MCF 10A (cell line): ENCODE measurements at regions of chrX and their contacts with region 1.

Region 1: DNA sequence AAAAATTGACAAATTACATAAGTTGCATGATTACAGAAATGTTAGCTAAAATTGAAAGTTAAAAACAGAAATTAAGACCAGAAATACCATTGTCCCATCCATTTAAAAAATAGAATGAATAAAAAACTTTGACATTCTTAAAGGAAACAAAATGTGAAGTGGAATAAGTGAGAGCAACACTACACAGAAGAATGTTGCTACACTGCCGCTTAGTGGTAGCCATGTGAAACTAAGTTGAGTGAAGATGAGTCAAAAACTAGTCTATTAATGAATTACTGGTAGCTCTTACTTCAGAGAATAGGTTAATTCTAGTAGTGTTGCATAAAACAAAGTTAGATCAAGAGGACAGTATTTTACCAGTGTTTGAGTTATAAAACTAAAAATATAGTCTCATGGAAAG is 571.0 kb upstream of the KLHL4 start:
- DNase-seq: peak; percentile 67
- H3K4me3 Mint-ChIP-seq: no peak overlapping the region
- H3K27ac Mint-ChIP-seq: no peak overlapping the region
- H3K4me1 Mint-ChIP-seq: no peaks in the 10 kb centered on the region
- H3K27me3 Mint-ChIP-seq: peaks cover 34% of the 10 kb centered on the region
- CTCF ChIP-seq: peak; percentile 75

Region 2: GRCh38 chrX:85611926-85612325 is 1334.6 kb before region 1 on chrX:
- CTCF ChIA-PET with region 1: interaction called, 4 read pairs
- POLR2A ChIA-PET with region 1: no interaction called
- intact Hi-C with region 1: loop called (anchors 1 kb)
- DNase-seq: peak; percentile 38
- H3K4me3 Mint-ChIP-seq: no peak overlapping the region
- H3K27ac Mint-ChIP-seq: no peak overlapping the region
- H3K4me1 Mint-ChIP-seq: peaks cover 5% of the 10 kb centered on the region
- H3K27me3 Mint-ChIP-seq: peaks cover 3% of the 10 kb centered on the region
- CTCF ChIP-seq: peak; percentile 45

Region 3: GRCh38 chrX:86133761-86134160 is 812.8 kb before region 1 on chrX:
- CTCF ChIA-PET with region 1: interaction called, 6 read pairs
- POLR2A ChIA-PET with region 1: no interaction called
- intact Hi-C with region 1: loop called (anchors 1 kb)
- DNase-seq: peak; percentile 30
- H3K4me3 Mint-ChIP-seq: no peak overlapping the region
- H3K27ac Mint-ChIP-seq: no peak overlapping the region
- H3K4me1 Mint-ChIP-seq: peaks cover 6% of the 10 kb centered on the region
- H3K27me3 Mint-ChIP-seq: peaks cover 31% of the 10 kb centered on the region
- CTCF ChIP-seq: peak; percentile 44

Region 4: DNA sequence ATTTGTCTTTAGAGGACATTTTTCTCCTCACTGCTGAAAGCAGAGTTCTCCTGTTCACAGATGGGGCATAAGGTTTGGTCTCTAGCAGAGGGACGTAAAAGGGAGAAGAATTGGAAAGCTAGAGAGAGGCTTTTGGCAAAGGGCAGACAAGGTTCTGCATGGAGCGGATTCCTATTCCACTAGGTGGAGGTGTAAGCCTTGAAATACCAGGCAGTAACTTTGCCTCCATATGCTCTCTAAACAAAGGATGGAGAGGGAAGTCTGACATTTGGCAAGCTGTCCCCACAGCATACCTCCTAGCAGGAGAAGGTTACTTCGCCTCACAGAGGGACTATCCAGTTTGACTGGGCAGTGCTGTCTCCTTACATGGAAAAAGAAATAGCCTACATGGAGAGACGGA is 623.7 kb before region 1 on chrX:
- CTCF ChIA-PET with region 1: interaction called, 4 read pairs
- POLR2A ChIA-PET with region 1: no interaction called
- intact Hi-C with region 1: loop called (anchors 1 kb)
- DNase-seq: peak; percentile 2
- H3K4me3 Mint-ChIP-seq: no peak overlapping the region
- H3K27ac Mint-ChIP-seq: no peak overlapping the region
- H3K4me1 Mint-ChIP-seq: no peaks in the 10 kb centered on the region
- H3K27me3 Mint-ChIP-seq: no peaks in the 10 kb centered on the region
- CTCF ChIP-seq: no peak

Region 5: GRCh38 chrX:86806788-86807187 is 139.8 kb before region 1 on chrX:
- CTCF ChIA-PET with region 1: interaction called, 3 read pairs
- POLR2A ChIA-PET with region 1: no interaction called
- intact Hi-C with region 1: loop called (anchors 10 kb)
- DNase-seq: peak; percentile 24
- H3K4me3 Mint-ChIP-seq: no peak overlapping the region
- H3K27ac Mint-ChIP-seq: no peak overlapping the region
- H3K4me1 Mint-ChIP-seq: no peaks in the 10 kb centered on the region
- H3K27me3 Mint-ChIP-seq: no peaks in the 10 kb centered on the region
- CTCF ChIP-seq: peak; percentile 20

Region 6: DNA sequence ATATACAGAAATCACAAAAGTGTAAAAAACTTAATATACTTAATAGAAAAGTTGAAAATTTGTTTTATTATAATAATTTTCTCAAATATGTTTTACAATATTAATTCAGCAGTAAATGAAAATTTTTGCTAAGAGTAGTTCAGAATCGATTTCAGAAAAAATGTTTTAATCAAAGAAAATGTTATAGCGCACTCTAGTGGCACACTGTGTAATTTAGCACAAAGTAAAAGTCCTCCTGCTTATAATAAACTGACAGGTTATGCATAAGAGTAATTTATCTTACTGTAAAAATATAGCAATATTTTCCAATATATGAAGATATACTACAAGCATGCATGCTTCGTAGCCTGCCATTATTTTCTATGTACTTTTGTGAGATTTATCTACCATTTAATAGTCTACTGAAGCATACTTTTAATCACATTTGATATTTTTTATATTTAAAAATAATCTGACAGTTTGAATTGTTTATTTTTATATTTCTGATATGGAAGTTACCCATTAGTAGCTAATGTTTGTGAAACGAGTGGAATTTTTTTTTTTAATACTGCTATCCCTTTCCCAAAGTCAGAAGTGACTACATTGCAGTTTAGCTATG is 353.1 kb after region 1 on chrX:
- CTCF ChIA-PET with region 1: interaction called, 3 read pairs
- POLR2A ChIA-PET with region 1: no interaction called
- intact Hi-C with region 1: loop called (anchors 5 kb)
- DNase-seq: peak; percentile 47
- H3K4me3 Mint-ChIP-seq: no peak overlapping the region
- H3K27ac Mint-ChIP-seq: no peak overlapping the region
- H3K4me1 Mint-ChIP-seq: no peaks in the 10 kb centered on the region
- H3K27me3 Mint-ChIP-seq: peaks cover 10% of the 10 kb centered on the region
- CTCF ChIP-seq: peak; percentile 48

Region 7: GRCh38 chrX:87890437-87890836 is 943.9 kb after region 1 on chrX:
- CTCF ChIA-PET with region 1: no interaction called
- POLR2A ChIA-PET with region 1: no interaction called
- intact Hi-C with region 1: no loop called
- DNase-seq: no peak
- H3K4me3 Mint-ChIP-seq: no peak overlapping the region
- H3K27ac Mint-ChIP-seq: no peak overlapping the region
- H3K4me1 Mint-ChIP-seq: no peaks in the 10 kb centered on the region
- H3K27me3 Mint-ChIP-seq: no peaks in the 10 kb centered on the region
- CTCF ChIP-seq: no peak